ENCODE measurements at regions of chr4 and their contacts with region 1.

Region 1: GRCh38 chr4:14856076-14856933 is 146.0 kb upstream of the CPEB2 start:
- DNase-seq: peak; percentile 88
- H3K4me3 Mint-ChIP-seq: no peak overlapping the region
- H3K27ac Mint-ChIP-seq: peak overlapping the region; percentile 86
- H3K4me1 Mint-ChIP-seq: peaks cover 24% of the 10 kb centered on the region
- H3K27me3 Mint-ChIP-seq: peaks cover 19% of the 10 kb centered on the region

Region 2: DNA sequence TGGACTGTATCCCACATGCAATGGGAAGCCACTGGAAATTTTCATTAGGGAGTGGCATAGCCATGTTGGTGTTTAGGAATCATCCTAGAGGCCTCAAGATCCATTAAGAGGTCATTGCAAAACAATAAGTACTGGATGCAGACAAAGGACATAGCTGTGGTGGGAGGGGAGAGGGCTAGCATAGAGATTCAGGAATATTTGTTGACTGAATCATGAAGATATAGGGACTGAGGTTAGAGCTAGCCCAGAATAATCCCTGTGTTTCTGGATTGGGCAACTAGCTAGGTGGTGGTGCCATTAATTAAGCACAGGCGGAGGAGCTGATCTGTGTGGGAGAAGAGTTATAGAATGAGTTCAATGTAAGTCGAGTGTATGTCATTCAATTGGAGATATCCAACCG is 1507.2 kb before region 1 on chr4:
- CTCF ChIA-PET with region 1: no interaction called
- intact Hi-C with region 1: no loop called
- DNase-seq: no peak
- H3K4me3 Mint-ChIP-seq: no peak overlapping the region
- H3K27ac Mint-ChIP-seq: no peak overlapping the region
- H3K4me1 Mint-ChIP-seq: no peaks in the 10 kb centered on the region
- H3K27me3 Mint-ChIP-seq: no peaks in the 10 kb centered on the region

Region 3: GRCh38 chr4:14787894-14788293 is 68.4 kb before region 1 on chr4:
- CTCF ChIA-PET with region 1: no interaction called
- intact Hi-C with region 1: loop called (anchors 1 kb)
- DNase-seq: peak; percentile 41
- H3K4me3 Mint-ChIP-seq: no peak overlapping the region
- H3K27ac Mint-ChIP-seq: no peak overlapping the region
- H3K4me1 Mint-ChIP-seq: peaks cover 21% of the 10 kb centered on the region
- H3K27me3 Mint-ChIP-seq: peaks cover 33% of the 10 kb centered on the region

Region 4: GRCh38 chr4:14920759-14921320 is 64.5 kb after region 1 on chr4:
- CTCF ChIA-PET with region 1: no interaction called
- intact Hi-C with region 1: loop called (anchors 2 kb)
- DNase-seq: peak; percentile 35
- H3K4me3 Mint-ChIP-seq: no peak overlapping the region
- H3K27ac Mint-ChIP-seq: no peak overlapping the region
- H3K4me1 Mint-ChIP-seq: no peaks in the 10 kb centered on the region
- H3K27me3 Mint-ChIP-seq: peaks cover 9% of the 10 kb centered on the region

Region 5: DNA sequence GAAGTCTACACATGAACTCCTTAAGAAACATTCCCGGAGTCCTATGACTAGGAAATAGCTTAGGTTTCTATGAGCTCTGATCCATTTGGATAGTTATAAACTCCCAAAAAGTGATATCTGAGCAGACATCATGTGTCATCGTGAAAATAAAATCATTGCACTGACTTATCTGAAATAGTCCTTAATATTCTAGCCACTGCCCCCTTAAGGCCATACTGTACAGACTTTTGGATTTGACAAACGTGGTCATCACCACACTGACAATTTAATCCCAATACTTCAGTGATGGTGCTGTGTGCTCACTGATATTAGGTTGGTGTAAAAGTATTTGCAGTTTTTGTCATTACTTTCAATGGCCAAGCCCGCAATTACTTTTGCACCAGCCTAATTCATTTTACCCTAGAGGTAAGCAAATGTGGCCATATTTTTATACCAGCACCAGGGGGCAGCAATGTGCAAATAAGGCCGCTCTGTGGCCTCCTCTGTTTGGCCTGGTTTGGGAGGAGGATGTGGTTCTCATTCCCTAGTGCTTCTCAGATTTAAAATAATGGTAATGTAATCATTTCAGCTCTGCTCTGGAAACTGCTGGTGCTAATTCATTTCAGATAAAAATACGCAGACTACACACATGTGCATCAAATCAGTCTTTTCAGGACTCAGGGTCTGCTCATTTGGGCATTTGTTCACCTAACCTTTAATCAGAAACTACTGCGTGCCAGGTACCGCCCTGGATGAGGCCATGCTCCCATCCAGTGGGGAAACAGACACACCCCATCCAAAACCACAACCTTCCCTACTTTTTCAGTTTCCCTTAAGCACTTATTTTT is 375.2 kb after region 1 on chr4:
- CTCF ChIA-PET with region 1: no interaction called
- intact Hi-C with region 1: loop called (anchors 5 kb)
- DNase-seq: peak; percentile 89
- H3K4me3 Mint-ChIP-seq: no peak overlapping the region
- H3K27ac Mint-ChIP-seq: no peak overlapping the region
- H3K4me1 Mint-ChIP-seq: peaks cover 27% of the 10 kb centered on the region
- H3K27me3 Mint-ChIP-seq: no peaks in the 10 kb centered on the region

Region 6: DNA sequence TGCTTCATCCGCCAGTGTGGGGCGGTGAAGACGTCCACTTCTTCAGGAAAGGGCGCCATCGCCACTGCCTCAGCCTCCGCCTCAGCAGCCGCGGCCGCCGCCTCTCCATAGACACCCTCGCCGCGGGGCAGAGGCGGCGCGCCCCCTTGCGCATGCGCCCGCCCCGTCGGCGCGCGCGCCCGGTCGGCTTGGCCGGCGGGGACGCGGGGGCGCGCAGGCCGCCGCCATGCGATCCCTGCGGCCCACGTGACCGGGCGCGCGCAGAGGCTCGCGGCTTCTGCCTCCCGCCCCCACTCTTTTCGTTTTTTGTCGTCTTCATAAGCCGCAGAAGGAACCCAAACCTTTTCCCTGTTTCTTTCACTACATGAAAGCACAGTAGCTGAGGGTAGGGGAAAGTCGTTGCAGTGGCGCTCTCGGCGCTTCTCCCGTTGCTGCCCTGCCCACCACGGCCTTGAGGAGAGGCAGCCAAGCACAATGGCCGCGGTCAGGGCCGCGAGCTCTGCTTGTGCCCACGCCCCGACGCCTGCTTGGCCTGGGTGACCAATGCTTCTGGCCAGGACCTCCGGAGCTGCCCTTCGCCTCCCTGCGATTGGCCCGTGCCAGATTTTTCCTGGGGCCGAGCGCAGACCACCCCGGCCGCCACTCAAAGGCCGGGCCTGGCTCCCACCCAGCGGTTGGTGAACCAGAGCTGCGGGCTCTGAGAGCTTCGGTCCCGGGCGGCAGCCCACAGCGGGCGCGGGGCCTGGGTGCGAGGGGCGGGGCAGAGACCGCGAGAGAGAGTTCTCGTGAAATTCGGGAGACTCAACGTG is 799.1 kb after region 1 on chr4 and contains the start of gene FBXL5:
- CTCF ChIA-PET with region 1: no interaction called
- intact Hi-C with region 1: loop called (anchors 2 kb)
- DNase-seq: peak; percentile 79
- H3K4me3 Mint-ChIP-seq: peak within 1 kb of the TSS; percentile 99
- H3K27ac Mint-ChIP-seq: peak within 1 kb of the TSS; percentile 96
- H3K4me1 Mint-ChIP-seq: peaks cover 68% of the 10 kb centered on the region
- H3K27me3 Mint-ChIP-seq: no peaks in the 10 kb centered on the region
- total RNA-seq, gene FBXL5: 30.8 to 31.0 TPM